A673 (cell line): ENCODE measurements at regions of chr1 and their contacts with region 1.

Region 1: GRCh38 chr1:109655601-109656519 is at the start of gene GSTM4:
- DNase-seq: peak; percentile 95
- H3K4me3 ChIP-seq: peak within 1 kb of the TSS; percentile 97
- H3K27ac ChIP-seq: peak within 1 kb of the TSS; percentile 93
- H3K4me1 ChIP-seq: peaks cover 37% of the 10 kb centered on the region
- H3K27me3 ChIP-seq: no peaks in the 10 kb centered on the region
- CTCF ChIP-seq: no peak
- total RNA-seq, gene GSTM4: 173 and 188 TPM in 2 replicates

Region 2: GRCh38 chr1:109556563-109556962 is 99.3 kb before region 1 on chr1:
- CTCF ChIA-PET with region 1: no interaction called
- POLR2A ChIA-PET with region 1: interaction called, 11 read pairs
- intact Hi-C with region 1: no loop called
- DNase-seq: no peak
- H3K4me3 ChIP-seq: no peak overlapping the region
- H3K27ac ChIP-seq: no peak overlapping the region
- H3K4me1 ChIP-seq: peaks cover 27% of the 10 kb centered on the region
- H3K27me3 ChIP-seq: no peaks in the 10 kb centered on the region
- CTCF ChIP-seq: no peak

Region 3: GRCh38 chr1:109579491-109579890 is 76.4 kb before region 1 on chr1:
- CTCF ChIA-PET with region 1: no interaction called
- POLR2A ChIA-PET with region 1: no interaction called
- intact Hi-C with region 1: no loop called
- DNase-seq: no peak
- H3K4me3 ChIP-seq: no peak overlapping the region
- H3K27ac ChIP-seq: peak overlapping the region; percentile 3
- H3K4me1 ChIP-seq: no peaks in the 10 kb centered on the region
- H3K27me3 ChIP-seq: no peaks in the 10 kb centered on the region
- CTCF ChIP-seq: no peak